Posterior vena cava (tissue), 2 donors: ENCODE measurements at regions of chr2 and their contacts with region 1.

Region 1: GRCh38 chr2:209423562-209424198 is at the start of gene MAP2:
- DNase-seq: peak; percentile 94
- total RNA-seq, gene MAP2: 10.5 to 24.7 TPM

Region 2: GRCh38 chr2:209121691-209122090 is 302.0 kb before region 1 on chr2:
- intact Hi-C with region 1: no loop called
- DNase-seq: no peak

Region 3: GRCh38 chr2:209577376-209578357 is 154.0 kb after region 1 on chr2:
- intact Hi-C with region 1: loop called in 1 of 2 experiments (anchors 10 kb)
- DNase-seq: no peak

Region 4: DNA sequence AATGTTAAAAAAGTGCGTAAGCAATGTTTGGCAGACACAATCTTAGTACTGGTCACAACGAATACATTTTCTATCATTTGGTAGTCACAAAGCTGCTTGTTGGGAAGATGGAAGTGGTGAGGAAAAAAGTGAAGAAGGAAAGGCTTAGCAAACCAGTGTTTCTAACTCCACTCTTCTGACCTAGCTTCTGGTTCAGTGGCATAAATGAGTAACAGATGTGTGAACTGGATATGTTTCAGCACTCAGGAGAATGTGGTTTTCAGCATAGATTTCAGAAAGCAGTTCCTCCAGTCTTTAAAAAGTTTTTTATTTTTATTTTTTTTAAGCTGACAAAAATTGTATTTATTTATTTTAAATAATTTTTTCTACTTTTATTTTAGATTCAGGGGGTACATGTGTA is 1489.8 kb after region 1 on chr2:
- intact Hi-C with region 1: no loop called
- DNase-seq: no peak